ENCODE measurements at regions of chr1 and their contacts with region 1.

Region 1: GRCh38 chr1:161486806-161487741 is 18.2 kb upstream of the FCGR2A start:
- DNase-seq: peak; percentile 48 to 66
- ATAC-seq: peak; percentile 71 to 85; a peak in 4 of 6 replicates
- H3K4me3 ChIP-seq: no peak overlapping the region
- H3K27ac ChIP-seq: no peak overlapping the region
- H3K4me1 ChIP-seq: peaks cover 4% of the 10 kb centered on the region; the same call in 1 of the 3 replicates
- CTCF ChIP-seq: peak; percentile 77
- EP300 ChIP-seq: no peak
- POLR2A ChIP-seq: no peak
- RAD21 ChIP-seq: peak; percentile 71 to 82

Region 2: DNA sequence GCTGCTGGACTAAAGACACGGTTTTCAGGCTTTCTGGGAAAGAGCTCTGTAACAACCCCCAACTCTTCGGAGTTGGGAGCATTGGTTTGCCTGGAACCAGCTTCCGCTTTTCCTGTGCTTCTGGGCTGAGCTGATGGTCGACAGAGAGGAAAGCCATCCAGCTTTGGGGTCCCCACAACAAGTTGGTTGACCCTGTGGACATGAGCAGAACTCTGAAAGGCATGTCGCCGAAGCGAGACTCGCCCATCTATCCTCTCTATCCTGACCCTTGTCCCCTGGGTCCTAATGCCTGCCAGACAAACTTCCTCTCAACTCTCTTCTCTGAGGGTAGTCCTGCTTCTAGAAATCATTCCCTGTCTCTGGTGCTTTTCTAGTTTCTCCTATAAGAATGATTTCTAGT is 13.7 kb before region 1 on chr1:
- CTCF ChIA-PET with region 1: interaction called, 10 read pairs
- POLR2A ChIA-PET with region 1: no interaction called
- DNase-seq: peak in 1 of 2 experiments; percentile 56
- ATAC-seq: no peak
- H3K4me3 ChIP-seq: peak overlapping the region; percentile 38
- H3K27ac ChIP-seq: peak overlapping the region; percentile 60 to 83; a peak in 4 of 6 replicates
- H3K4me1 ChIP-seq: peaks cover 4% of the 10 kb centered on the region; the same call in 1 of the 3 replicates
- CTCF ChIP-seq: no peak
- EP300 ChIP-seq: no peak
- POLR2A ChIP-seq: no peak
- RAD21 ChIP-seq: no peak

Region 3: DNA sequence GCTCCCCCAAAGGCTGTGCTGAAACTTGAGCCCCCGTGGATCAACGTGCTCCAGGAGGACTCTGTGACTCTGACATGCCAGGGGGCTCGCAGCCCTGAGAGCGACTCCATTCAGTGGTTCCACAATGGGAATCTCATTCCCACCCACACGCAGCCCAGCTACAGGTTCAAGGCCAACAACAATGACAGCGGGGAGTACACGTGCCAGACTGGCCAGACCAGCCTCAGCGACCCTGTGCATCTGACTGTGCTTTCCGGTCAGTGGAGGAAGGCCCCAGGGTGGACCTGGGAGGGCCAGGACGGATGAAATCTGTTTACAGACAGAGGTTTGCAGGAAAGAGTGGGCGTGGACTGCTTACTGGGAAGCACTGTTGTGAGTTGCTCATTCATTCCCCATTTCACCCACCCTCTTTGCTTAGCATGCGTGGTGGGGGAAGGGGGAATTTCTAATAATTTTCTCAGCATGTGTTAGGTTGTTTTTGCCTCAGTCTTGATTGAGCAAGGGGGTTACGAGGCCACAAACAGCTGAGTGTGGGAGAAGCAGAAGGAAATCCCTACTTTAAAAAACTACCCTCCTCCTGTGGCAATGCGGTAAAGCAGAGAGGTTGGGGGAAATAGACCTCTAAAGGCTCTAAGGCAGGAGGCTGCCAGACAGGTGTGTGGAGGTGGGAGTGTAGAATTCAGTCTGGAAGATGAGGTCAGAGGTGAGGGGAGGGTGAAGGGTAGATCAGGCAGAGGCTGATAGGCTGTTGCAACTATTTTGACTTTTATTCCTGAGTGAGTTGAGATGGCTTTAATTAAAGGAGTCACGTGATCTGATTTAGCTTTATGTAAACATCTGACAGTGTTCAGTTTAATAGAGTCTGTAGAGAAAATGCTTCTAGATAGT is 19.5 kb after region 1 on chr1:
- CTCF ChIA-PET with region 1: interaction called, 10 read pairs
- POLR2A ChIA-PET with region 1: no interaction called
- DNase-seq: no peak
- ATAC-seq: no peak; a peak in 2 of 6 replicates
- H3K4me3 ChIP-seq: no peak overlapping the region
- H3K27ac ChIP-seq: no peak overlapping the region
- H3K4me1 ChIP-seq: no peaks in the 10 kb centered on the region
- CTCF ChIP-seq: no peak
- EP300 ChIP-seq: no peak
- POLR2A ChIP-seq: no peak
- RAD21 ChIP-seq: no peak

Measured in A549 (cell line).